ENCODE measurements at regions of chr2 and their contacts with region 1.

Region 1: DNA sequence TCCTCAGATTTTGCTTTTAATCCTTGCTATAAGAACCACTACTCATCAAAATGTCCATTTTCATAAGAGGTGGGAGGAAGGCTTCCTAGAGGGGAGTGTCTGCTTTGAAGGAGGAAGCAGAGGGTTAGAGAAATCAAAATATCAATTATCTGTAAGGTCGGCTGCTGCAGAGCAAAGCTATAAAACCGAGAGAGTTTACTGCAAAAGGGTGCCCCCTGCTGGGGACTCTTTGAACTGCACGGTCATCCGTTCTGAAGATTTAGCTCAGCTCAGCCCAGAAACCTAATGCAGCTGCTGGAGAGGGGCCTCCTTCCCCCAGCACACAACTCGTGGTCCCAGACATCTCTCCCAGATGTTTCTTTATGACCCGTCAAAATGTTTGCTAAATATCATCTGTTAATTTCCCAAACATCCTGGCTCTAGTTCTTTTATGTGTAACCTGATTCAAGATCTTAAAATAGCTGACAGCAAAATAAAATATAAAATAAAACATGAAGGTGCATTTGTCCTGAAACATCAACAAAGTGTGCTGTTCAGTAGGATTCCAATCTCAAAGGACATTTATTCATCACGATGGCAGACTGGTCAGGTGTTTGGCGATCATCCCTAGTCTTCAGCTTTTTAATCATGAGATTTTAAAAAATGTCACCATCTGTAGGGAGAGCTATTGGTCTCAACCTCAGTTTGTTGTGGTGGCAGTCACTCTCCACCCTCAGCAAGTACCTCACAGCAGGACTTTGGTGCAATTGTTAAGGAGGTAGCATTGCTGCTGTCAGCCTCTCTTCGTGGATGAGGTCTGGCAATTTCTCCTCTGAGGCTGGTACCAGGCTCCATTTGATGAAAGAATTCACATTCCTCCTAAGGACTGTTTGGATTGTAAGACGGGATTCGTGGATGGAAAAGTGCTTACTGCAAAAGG is 185.9 kb downstream of the MTX2 start:
- DNase-seq: peak; percentile 81 to 83
- H3K4me3 ChIP-seq: no peak overlapping the region
- H3K27ac ChIP-seq: no peak overlapping the region
- H3K4me1 ChIP-seq: peaks cover 0 to 7% (median 0%) of the 10 kb centered on the region in 4 donors
- H3K27me3 ChIP-seq: no peaks in the 10 kb centered on the region
- CTCF ChIP-seq: peak; percentile 84 to 90

Region 2: GRCh38 chr2:176126929-176127773 is 328.0 kb before region 1 on chr2:
- intact Hi-C with region 1: loop called (anchors 5 kb)
- DNase-seq: peak in 1 of 2 donors; percentile 63
- H3K4me3 ChIP-seq: no peak overlapping the region
- H3K27ac ChIP-seq: no peak overlapping the region
- H3K4me1 ChIP-seq: peaks cover 0 to 48% (median 34%) of the 10 kb centered on the region in 4 donors
- H3K27me3 ChIP-seq: peaks cover 0 to 74% of the 10 kb centered on the region in 2 donors
- CTCF ChIP-seq: peak; percentile 79 to 87

Region 3: DNA sequence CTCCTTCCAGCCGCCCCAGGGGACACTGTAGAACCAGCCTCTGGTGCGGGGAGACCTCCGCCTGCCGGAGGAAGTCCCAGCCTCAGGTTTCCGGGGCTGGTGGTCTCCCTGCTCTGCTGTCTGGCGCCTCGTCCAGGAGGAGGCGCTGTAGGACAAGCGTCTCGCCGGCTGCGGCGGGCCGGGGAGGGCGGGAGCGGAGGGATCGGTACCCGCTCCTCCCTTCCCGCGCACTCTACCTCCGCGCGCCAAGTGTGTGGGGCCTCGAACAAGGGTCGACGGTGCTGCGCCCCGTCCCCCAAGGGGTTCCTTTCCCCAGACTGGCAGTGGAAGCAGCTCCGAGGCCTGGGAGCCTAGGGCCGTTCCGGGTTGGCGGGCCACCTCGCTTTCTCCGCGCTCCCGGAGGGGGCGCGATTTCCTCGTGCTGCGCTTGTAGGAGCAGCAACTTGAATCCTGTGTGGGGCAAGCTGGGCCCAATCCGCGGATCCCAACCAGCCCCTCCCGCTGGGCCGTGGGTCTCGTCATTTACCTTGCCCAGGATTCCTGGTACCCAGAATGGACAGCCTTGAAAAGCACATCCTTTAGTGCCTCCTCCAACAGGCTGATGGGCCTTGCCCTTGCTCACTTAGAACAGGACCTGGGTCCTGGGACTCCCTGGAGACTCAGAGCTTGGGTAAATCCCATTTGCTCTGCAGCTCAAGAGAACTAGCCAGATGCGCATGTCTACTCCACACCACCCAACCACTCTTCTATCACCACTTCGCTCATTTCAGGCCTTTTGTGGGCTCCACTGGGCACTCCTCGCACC is 314.4 kb before region 1 on chr2:
- intact Hi-C with region 1: loop called (anchors 2 kb)
- DNase-seq: peak; percentile 51 to 85
- H3K4me3 ChIP-seq: peak overlapping the region; percentile 48 to 57
- H3K27ac ChIP-seq: peak overlapping the region; percentile 57 to 60
- H3K4me1 ChIP-seq: peaks cover 0 to 34% (median 19%) of the 10 kb centered on the region in 4 donors
- H3K27me3 ChIP-seq: peaks cover 0 to 19% of the 10 kb centered on the region in 2 donors
- CTCF ChIP-seq: peak; percentile 94 to 95

Region 4: GRCh38 chr2:176333685-176334084 is 121.5 kb before region 1 on chr2:
- intact Hi-C with region 1: no loop called
- DNase-seq: no peak
- H3K4me3 ChIP-seq: no peak overlapping the region
- H3K27ac ChIP-seq: no peak overlapping the region
- H3K4me1 ChIP-seq: peaks cover 0 to 5% (median 0%) of the 10 kb centered on the region in 4 donors
- H3K27me3 ChIP-seq: no peaks in the 10 kb centered on the region
- CTCF ChIP-seq: no peak

Region 5: GRCh38 chr2:176554101-176555048 is 99.2 kb after region 1 on chr2:
- intact Hi-C with region 1: loop called (anchors 5 kb)
- DNase-seq: no peak
- H3K4me3 ChIP-seq: peak overlapping the region; percentile 43 to 52
- H3K27ac ChIP-seq: peak overlapping the region; percentile 39 to 58
- H3K4me1 ChIP-seq: peaks cover 0 to 18% (median 10%) of the 10 kb centered on the region in 4 donors
- H3K27me3 ChIP-seq: peaks cover 0 to 10% of the 10 kb centered on the region in 2 donors
- CTCF ChIP-seq: peak; percentile 78